ENCODE measurements at regions of chr6 and their contacts with region 1.

Region 1: DNA sequence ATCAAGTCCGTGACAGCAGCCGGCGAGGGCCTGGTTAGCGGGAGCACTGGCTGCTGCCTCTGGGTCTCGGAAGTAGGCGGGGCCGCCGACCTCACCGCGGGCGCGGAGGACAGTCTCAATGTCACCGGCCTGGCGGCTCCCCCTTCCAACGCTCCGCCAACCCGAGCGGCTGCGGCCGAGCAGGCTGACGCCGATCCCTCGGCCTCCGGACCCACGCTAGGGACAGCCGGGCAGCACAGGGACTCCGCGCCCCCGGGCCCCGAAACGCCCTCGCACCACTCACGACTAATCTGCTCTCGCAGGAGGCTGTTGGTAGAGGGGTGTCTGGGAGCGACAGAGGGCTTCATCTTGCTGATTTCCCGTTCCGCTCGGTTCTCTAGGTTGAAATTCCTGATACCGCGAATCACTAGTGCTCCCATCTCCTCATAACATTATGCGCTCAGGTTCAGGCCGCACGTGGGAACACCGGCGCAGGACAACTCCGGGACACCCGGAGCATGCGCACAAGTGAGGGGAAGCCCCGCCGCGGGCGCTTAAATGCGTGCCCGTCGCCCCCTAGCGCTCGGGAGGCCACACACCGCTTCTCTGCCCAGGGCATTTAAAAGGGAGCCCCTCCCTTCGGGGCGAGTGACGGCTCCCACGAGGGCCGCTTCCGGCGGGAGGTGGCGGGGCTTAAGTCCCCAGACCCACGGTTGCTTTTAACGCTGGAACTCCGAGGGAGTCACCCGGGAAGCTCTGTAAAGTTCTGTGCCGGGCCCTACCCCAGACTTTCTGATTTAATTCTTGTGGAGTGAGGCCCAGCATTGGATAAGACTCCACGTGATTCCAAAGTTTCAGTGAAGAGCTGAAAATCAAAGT is at the start of gene NDUFAF4:
- DNase-seq: peak; percentile 98
- ATAC-seq: peak; percentile 98 to 99 (median 99)
- H3K4me3 ChIP-seq: peak within 1 kb of the TSS; percentile 97
- H3K27ac ChIP-seq: peak within 1 kb of the TSS; percentile 94
- H3K4me1 ChIP-seq: peaks cover 31% of the 10 kb centered on the region
- H3K27me3 ChIP-seq: no peaks in the 10 kb centered on the region
- CTCF ChIP-seq: peak; percentile 91
- total RNA-seq, gene NDUFAF4: 61.3 to 113 (median 79.7) TPM

Region 2: GRCh38 chr6:96521644-96522464 is 375.8 kb before region 1 on chr6 and contains the start of gene UFL1:
- intact Hi-C with region 1: loop called (anchors 5 to 10 kb)
- DNase-seq: peak; percentile 94 to 97
- ATAC-seq: peak; percentile 98 to 100 (median 100)
- H3K4me3 ChIP-seq: peak within 1 kb of the TSS; percentile 94
- H3K27ac ChIP-seq: peak within 1 kb of the TSS; percentile 98
- H3K4me1 ChIP-seq: peaks cover 18% of the 10 kb centered on the region
- H3K27me3 ChIP-seq: no peaks in the 10 kb centered on the region
- CTCF ChIP-seq: no peak
- total RNA-seq, gene UFL1: 24.7 to 26.7 (median 25.9) TPM

Region 3: GRCh38 chr6:96542702-96543101 is 354.9 kb before region 1 on chr6:
- intact Hi-C with region 1: loop called in 1 of 2 experiments (anchors 5 kb)
- DNase-seq: no peak
- ATAC-seq: no peak
- H3K4me3 ChIP-seq: no peak overlapping the region
- H3K27ac ChIP-seq: no peak overlapping the region
- H3K4me1 ChIP-seq: no peaks in the 10 kb centered on the region
- H3K27me3 ChIP-seq: no peaks in the 10 kb centered on the region
- CTCF ChIP-seq: peak; percentile 21

Region 4: GRCh38 chr6:96963809-96964208 is 66.2 kb after region 1 on chr6:
- intact Hi-C with region 1: no loop called
- DNase-seq: no peak
- ATAC-seq: no peak
- H3K4me3 ChIP-seq: no peak overlapping the region
- H3K27ac ChIP-seq: no peak overlapping the region
- H3K4me1 ChIP-seq: no peaks in the 10 kb centered on the region
- H3K27me3 ChIP-seq: no peaks in the 10 kb centered on the region
- CTCF ChIP-seq: no peak

Region 5: GRCh38 chr6:97068211-97068610 is 170.6 kb after region 1 on chr6:
- intact Hi-C with region 1: loop called in 1 of 2 experiments (anchors 5 kb)
- DNase-seq: no peak
- ATAC-seq: no peak
- H3K4me3 ChIP-seq: no peak overlapping the region
- H3K27ac ChIP-seq: no peak overlapping the region
- H3K4me1 ChIP-seq: no peaks in the 10 kb centered on the region
- H3K27me3 ChIP-seq: peaks cover 0 to 3% (median 0%) of the 10 kb centered on the region in 3 donors
- CTCF ChIP-seq: peak; percentile 47

Region 6: GRCh38 chr6:97394160-97394748 is 496.6 kb after region 1 on chr6:
- intact Hi-C with region 1: loop called (anchors 5 to 10 kb)
- DNase-seq: no peak
- ATAC-seq: peak; percentile 56 to 83 (median 74)
- H3K4me3 ChIP-seq: no peak overlapping the region
- H3K27ac ChIP-seq: no peak overlapping the region
- H3K4me1 ChIP-seq: no peaks in the 10 kb centered on the region
- H3K27me3 ChIP-seq: peaks cover 0 to 3% (median 0%) of the 10 kb centered on the region in 3 donors
- CTCF ChIP-seq: peak; percentile 92